Activated T-helper 1 cell treated with anti-CD3 and anti-CD28 coated beads, Interleukin-12 subunit alpha, Interleukin-12 subunit beta, Interleukin-2, Interleukin-4 antibody, amounts not matched to agents 30 ng/mL and 10 ng/mL and 1 ng/mL, durations not matched to agents 14 hours and 24 hours and 36 hours (primary cell): ENCODE measurements at regions of chr15 and their contacts with region 1.

Region 1: DNA sequence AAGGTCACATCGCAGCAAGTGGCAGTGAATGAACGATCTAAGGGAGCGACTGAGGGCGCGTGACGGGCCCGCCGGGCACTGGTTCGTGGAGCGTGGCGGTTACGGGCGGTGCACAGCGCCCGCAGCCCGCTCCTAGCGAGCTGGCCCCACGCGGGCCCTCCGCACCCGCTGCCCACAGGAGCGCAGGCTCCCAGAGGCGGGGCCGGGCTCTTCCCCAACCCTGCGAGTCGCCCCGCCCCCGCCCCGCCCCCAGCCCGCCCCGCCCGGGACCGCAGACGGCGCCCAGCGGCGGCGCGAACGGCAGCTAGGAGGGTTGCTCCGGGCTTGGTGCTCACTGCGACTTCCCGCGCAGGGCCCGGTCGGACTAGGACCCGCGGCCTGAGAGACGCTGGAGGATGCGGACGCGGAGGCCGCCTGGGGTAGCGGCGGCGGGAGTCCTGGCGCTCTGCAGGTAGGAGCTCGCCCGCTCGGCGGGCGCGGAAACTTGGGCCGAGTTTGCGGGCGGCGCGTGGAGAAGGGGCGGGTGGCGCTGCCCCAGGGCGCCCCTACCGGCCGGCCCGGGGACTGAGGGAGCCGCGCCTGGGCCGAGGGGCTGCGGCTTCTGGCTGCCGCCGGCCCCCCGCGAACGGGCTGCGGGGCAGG is at the start of gene C15orf39:
- DNase-seq: peak; percentile 74
- H3K4me3 Mint-ChIP-seq: peak within 1 kb of the TSS; percentile 92
- H3K27ac Mint-ChIP-seq: peak within 1 kb of the TSS; percentile 90
- H3K4me1 Mint-ChIP-seq: peaks cover 62% of the 10 kb centered on the region
- H3K27me3 Mint-ChIP-seq: peaks cover 4% of the 10 kb centered on the region
- total RNA-seq, gene C15orf39: 46.1 and 49.5 TPM in 2 replicates

Region 2: GRCh38 chr15:74937596-74938296 is 264.0 kb before region 1 on chr15 and contains the start of gene COX5A:
- intact Hi-C with region 1: loop called (anchors 1 kb)
- DNase-seq: peak; percentile 91
- H3K4me3 Mint-ChIP-seq: peak within 1 kb of the TSS; percentile 91
- H3K27ac Mint-ChIP-seq: peak within 1 kb of the TSS; percentile 91
- H3K4me1 Mint-ChIP-seq: peaks cover 22% of the 10 kb centered on the region
- H3K27me3 Mint-ChIP-seq: no peaks in the 10 kb centered on the region
- total RNA-seq, gene COX5A: 273 and 290 TPM in 2 replicates

Region 3: GRCh38 chr15:75023181-75023871 is 178.4 kb before region 1 on chr15 and contains the start of gene PPCDC:
- intact Hi-C with region 1: loop called (anchors 1 kb)
- DNase-seq: peak; percentile 93
- H3K4me3 Mint-ChIP-seq: peak within 1 kb of the TSS; percentile 96
- H3K27ac Mint-ChIP-seq: peak within 1 kb of the TSS; percentile 90
- H3K4me1 Mint-ChIP-seq: peaks cover 23% of the 10 kb centered on the region
- H3K27me3 Mint-ChIP-seq: no peaks in the 10 kb centered on the region
- total RNA-seq, gene PPCDC: 25.0 and 27.1 TPM in 2 replicates

Region 4: GRCh38 chr15:75069301-75069925 is 132.3 kb before region 1 on chr15:
- intact Hi-C with region 1: loop called (anchors 1 kb)
- DNase-seq: peak; percentile 22
- H3K4me3 Mint-ChIP-seq: peak overlapping the region; percentile 46
- H3K27ac Mint-ChIP-seq: peak overlapping the region; percentile 82
- H3K4me1 Mint-ChIP-seq: peaks cover 88% of the 10 kb centered on the region
- H3K27me3 Mint-ChIP-seq: no peaks in the 10 kb centered on the region

Region 5: DNA sequence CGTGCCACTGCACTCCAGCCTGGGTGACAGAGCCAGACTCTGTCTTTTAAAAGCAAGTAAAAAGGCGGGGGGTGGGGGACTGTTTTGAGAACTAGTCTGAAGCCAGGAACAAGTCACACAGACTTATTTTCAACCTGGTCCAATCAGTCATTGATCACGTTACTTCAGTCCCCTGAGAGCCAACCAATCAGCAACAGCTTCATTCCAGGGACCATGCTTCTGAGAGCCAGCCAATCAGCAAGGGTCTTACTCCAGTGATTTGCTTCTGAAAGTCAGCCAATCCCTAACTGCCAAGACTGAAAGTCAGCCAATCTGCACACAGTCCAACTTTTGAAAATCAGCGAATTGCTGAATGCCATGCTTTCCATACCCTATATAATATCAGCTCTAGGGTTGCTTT is 48.6 kb before region 1 on chr15:
- intact Hi-C with region 1: loop called (anchors 2 kb)
- DNase-seq: peak; percentile 23
- H3K4me3 Mint-ChIP-seq: no peak overlapping the region
- H3K27ac Mint-ChIP-seq: no peak overlapping the region
- H3K4me1 Mint-ChIP-seq: peaks cover 41% of the 10 kb centered on the region
- H3K27me3 Mint-ChIP-seq: peaks cover 2% of the 10 kb centered on the region

Region 6: DNA sequence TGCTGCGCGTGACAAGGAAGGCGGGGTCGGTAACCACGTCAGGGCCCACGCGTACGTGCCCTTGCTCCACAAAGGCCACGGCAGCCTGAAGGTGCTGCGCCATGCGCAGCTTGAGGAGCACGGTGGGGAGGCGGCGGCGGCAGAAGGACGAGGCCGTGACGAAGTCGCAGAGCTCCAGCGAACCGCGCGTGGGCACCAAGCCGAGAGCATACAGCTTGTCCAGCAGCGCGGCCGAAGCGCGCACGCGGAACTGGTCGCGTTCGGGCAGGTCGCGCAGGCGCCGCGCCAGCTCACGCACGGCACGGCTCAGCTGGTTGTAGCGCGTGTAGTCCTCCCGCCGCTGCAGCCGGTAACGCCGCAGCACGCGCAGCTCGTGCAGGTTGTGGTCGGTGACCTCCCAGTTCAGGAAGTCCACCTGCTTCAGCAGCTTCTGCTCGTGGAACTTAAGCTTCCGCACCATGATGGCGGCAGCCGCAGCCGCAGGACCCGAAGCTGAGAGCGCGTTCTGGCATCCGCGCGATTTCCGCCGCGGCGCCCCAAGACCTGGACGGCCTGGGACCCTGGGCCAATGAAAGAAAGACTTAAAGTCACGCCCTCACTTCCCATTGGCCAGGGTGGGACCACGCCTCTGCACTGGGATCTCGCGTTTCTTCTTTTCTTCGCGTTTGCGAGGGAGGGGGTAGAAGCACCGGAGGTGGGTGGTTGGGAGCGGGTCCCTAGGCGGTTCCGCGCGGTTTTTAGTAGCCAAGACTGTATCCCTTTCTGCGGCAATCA is 438.2 kb after region 1 on chr15 and contains the start of gene IMP3:
- intact Hi-C with region 1: loop called (anchors 5 kb)
- DNase-seq: peak; percentile 93
- H3K4me3 Mint-ChIP-seq: peak within 1 kb of the TSS; percentile 90
- H3K27ac Mint-ChIP-seq: peak within 1 kb of the TSS; percentile 94
- H3K4me1 Mint-ChIP-seq: peaks cover 39% of the 10 kb centered on the region
- H3K27me3 Mint-ChIP-seq: peaks cover 6% of the 10 kb centered on the region
- total RNA-seq, gene IMP3: 110 and 113 TPM in 2 replicates